Mammary epithelial cell (primary cell): ENCODE measurements at regions of chr2 and their contacts with region 1.

Region 1: GRCh38 chr2:177332041-177332991 is 60.3 kb upstream of the AGPS start:
- DNase-seq: peak; percentile 60
- H3K4me3 ChIP-seq: no peak overlapping the region
- H3K27ac ChIP-seq: no peak overlapping the region
- H3K4me1 ChIP-seq: peaks cover 10% of the 10 kb centered on the region
- H3K27me3 ChIP-seq: no peaks in the 10 kb centered on the region
- CTCF ChIP-seq: peak; percentile 59 to 67

Region 2: DNA sequence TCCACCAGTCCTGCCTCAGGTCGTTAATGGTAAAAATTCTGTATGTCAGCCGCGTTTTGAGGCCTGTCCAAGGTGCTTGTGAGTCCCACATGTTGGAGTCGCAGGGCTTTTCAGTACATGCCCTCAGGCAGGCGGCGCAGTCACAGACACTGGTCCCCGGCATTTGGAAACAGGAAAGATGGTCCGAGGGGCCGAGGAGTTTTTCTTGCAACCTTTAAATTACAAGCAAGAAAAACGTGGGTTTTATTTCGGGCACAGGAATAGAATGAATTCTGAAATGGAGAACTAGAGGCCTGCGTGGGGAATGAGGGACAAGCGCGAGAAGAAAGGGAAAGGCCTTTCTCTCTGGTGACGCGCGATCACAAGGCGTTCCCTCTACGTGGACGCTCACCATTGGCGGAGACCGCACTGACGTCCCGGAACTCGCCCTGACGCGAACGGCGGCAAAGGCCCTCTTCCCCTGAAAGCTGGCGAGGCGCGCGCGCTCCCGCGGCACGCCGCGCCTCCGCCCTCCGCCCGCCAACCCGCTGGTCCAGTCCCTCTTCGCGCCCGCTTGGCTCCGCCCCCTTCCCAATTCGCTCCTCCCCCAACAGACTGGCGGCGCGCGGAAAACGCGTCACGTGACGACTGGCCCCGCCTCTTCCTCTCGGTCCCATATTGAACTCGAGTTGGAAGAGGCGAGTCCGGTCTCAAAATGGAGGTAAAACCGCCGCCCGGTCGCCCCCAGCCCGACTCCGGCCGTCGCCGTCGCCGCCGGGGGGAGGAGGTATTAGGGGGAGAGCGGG is 120.0 kb before region 1 on chr2 and contains the start of gene HNRNPA3:
- CTCF ChIA-PET with region 1: interaction called, 5 read pairs
- dilution Hi-C with region 1: no loop called
- in situ Hi-C with region 1: no loop called
- intact Hi-C with region 1: loop called (anchors 5 kb)
- DNase-seq: peak; percentile 99
- H3K4me3 ChIP-seq: peak within 1 kb of the TSS; percentile 81 to 100 (median 97)
- H3K27ac ChIP-seq: peak within 1 kb of the TSS; percentile 99
- H3K4me1 ChIP-seq: peaks cover 20% of the 10 kb centered on the region
- H3K27me3 ChIP-seq: no peaks in the 10 kb centered on the region
- CTCF ChIP-seq: peak in 1 of 2 donors; percentile 18
- total RNA-seq, gene HNRNPA3: 18.2 to 196 TPM

Region 3: DNA sequence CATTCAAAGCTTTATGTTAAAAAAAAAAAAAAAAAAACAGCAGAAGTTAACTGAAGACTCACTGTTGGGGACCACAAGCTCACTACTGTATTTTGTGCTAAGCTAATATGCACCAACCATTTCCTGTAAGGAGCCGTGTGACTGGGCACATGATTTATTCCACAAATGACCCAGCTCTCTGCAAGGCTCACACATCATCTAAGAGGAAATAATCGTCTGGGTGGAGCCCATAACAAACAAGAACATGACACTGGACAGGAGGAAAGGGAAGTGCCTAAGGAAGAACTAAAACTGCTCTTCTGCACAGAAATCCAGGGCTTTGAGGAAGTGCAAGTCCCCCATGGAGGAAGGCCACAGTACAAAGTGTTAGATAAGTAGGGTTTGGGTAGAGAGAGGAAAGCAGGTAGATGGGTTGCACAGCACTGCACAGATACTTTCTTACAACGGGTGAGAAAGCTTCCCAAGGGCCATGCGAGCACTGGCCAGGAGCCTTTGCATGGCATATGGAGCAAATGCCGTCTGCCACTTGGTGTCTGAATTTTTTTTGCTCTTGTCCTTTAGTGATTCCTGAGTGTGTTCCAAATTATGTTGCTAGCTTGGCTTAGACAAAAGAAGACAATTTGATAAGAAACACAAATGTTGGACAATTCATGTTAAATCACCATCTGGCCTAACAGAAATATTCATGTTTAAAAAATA is 92.2 kb before region 1 on chr2:
- CTCF ChIA-PET with region 1: interaction called, 3 read pairs
- dilution Hi-C with region 1: loop called (anchors 5 kb)
- in situ Hi-C with region 1: no loop called
- intact Hi-C with region 1: no loop called
- DNase-seq: peak; percentile 52
- H3K4me3 ChIP-seq: no peak overlapping the region
- H3K27ac ChIP-seq: peak overlapping the region; percentile 92
- H3K4me1 ChIP-seq: peaks cover 45% of the 10 kb centered on the region
- H3K27me3 ChIP-seq: no peaks in the 10 kb centered on the region
- CTCF ChIP-seq: no peak

Region 4: GRCh38 chr2:177296040-177296439 is 36.3 kb before region 1 on chr2:
- CTCF ChIA-PET with region 1: no interaction called
- dilution Hi-C with region 1: no loop called
- in situ Hi-C with region 1: no loop called
- intact Hi-C with region 1: loop called (anchors 1 kb)
- DNase-seq: peak; percentile 19
- H3K4me3 ChIP-seq: no peak overlapping the region
- H3K27ac ChIP-seq: no peak overlapping the region
- H3K4me1 ChIP-seq: peaks cover 4% of the 10 kb centered on the region
- H3K27me3 ChIP-seq: no peaks in the 10 kb centered on the region
- CTCF ChIP-seq: peak; percentile 35 to 43

Region 5: DNA sequence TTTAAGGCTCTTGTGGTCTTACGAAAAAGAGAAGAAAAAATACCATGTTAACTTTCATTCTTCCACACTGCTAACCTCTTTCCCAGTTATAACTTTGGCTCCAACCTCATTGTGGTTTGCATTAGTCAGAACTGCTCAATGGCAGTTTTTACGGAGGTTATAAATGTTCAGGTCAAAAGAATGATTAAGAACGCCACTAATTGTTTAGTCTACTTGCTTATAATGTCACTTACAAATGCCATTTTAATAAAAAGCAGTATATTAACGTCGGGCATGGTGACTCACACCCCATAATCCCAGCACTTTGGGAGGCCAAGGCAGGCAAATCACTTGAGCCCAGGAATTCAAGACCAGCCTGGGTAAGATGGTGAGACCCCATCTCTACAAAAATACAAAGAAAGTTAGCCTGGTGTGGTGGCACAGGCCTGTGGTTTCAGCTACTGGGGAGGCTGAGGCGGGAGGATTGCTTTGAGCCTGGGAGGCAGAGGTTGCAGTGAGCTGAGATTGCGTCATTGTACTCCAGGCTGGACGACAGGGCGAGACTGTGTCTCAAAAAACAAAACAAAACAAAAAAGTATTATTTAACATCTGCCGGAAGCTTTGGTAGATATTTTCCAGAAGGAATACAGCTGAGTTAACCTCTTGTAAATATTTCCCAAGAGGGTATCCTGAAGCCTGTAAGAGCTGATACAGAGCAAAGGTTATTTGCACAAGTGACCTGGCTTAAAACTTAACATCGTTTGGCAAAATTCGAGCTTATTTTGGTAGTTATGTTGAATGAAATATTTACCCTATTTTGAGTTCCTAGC is 65.4 kb after region 1 on chr2:
- CTCF ChIA-PET with region 1: no interaction called
- dilution Hi-C with region 1: no loop called
- in situ Hi-C with region 1: no loop called
- intact Hi-C with region 1: no loop called
- DNase-seq: peak; percentile 77
- H3K4me3 ChIP-seq: no peak overlapping the region
- H3K27ac ChIP-seq: peak overlapping the region; percentile 40
- H3K4me1 ChIP-seq: peaks cover 30% of the 10 kb centered on the region
- H3K27me3 ChIP-seq: no peaks in the 10 kb centered on the region
- CTCF ChIP-seq: no peak

Region 6: DNA sequence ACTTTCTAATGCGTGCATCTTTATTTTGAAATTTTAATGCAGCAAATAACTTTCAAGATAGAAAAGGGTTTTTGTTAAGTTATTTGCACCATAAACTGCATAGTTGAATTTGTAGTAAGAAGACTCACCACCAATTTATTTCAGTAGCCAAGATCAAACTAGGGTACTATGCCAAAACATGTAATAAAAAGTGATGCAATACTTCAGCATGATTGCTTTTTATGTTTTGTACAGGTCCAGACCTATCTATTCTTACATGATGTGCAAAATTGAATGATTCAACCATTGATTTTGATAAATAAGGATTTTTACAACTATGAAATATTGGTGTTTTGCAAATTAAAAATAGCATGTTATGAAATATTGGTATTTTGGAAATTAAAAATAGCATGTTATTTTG is 87.0 kb after region 1 on chr2:
- CTCF ChIA-PET with region 1: interaction called, 3 read pairs
- dilution Hi-C with region 1: loop called (anchors 5 kb)
- in situ Hi-C with region 1: loop called (anchors 5 kb)
- intact Hi-C with region 1: loop called (anchors 1 kb)
- DNase-seq: peak; percentile 80
- H3K4me3 ChIP-seq: peak overlapping the region in 1 of 3 experiments; percentile 37
- H3K27ac ChIP-seq: no peak overlapping the region
- H3K4me1 ChIP-seq: peaks cover 12% of the 10 kb centered on the region
- H3K27me3 ChIP-seq: no peaks in the 10 kb centered on the region
- CTCF ChIP-seq: no peak

Region 7: DNA sequence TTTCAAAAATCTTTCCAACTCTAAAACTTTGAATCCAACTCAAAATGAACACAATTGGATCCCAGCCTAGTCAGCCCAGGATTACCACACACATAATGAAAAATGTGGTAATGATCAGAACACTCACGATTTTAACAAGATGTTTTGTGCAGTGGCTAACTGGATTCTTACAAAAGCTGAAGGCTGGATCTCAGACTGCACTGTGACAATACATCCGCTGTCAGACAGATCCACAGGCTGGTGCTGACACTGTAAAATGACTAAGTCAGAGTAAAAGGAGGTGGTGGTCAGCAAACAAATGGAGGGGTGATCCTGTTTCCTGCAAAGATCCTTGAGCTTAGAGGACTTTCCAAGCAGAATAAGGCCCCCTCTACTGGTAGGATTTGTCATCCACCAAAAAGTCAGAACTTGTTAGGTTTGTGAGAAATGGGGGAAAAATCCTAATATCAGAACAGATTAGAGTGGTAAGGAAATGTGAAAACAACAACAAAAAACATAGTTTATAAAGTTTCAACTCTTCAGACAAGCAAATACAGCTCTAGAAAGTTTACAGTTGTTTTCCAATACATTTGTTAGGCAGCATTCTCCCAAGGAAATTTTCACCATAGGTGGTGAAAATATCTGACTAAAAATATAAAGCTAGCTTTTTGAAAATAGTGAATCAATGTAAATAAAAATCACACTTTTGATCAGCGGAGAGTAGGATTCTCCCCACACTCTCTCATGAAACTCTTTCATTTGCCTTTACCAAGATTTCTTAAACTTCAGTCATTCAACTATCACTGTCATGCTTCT is 272.2 kb after region 1 on chr2:
- CTCF ChIA-PET with region 1: no interaction called
- dilution Hi-C with region 1: no loop called
- in situ Hi-C with region 1: loop called (anchors 10 to 25 kb)
- intact Hi-C with region 1: no loop called
- DNase-seq: peak; percentile 23
- H3K4me3 ChIP-seq: no peak overlapping the region
- H3K27ac ChIP-seq: no peak overlapping the region
- H3K4me1 ChIP-seq: no peaks in the 10 kb centered on the region
- H3K27me3 ChIP-seq: no peaks in the 10 kb centered on the region
- CTCF ChIP-seq: peak; percentile 62 to 76

Region 8: GRCh38 chr2:177724398-177725287 is 392.3 kb after region 1 on chr2:
- CTCF ChIA-PET with region 1: interaction called, 5 read pairs
- dilution Hi-C with region 1: no loop called
- in situ Hi-C with region 1: loop called in 1 of 2 experiments (anchors 10 kb)
- intact Hi-C with region 1: loop called (anchors 1 kb)
- DNase-seq: peak; percentile 15
- H3K4me3 ChIP-seq: no peak overlapping the region
- H3K27ac ChIP-seq: no peak overlapping the region
- H3K4me1 ChIP-seq: no peaks in the 10 kb centered on the region
- H3K27me3 ChIP-seq: peaks cover 2% of the 10 kb centered on the region
- CTCF ChIP-seq: peak; percentile 91 to 95

Region 9: GRCh38 chr2:178478439-178479274 is 1146.3 kb after region 1 on chr2 and contains the start of gene FKBP7:
- CTCF ChIA-PET with region 1: no interaction called
- dilution Hi-C with region 1: no loop called
- in situ Hi-C with region 1: no loop called
- intact Hi-C with region 1: no loop called
- DNase-seq: peak; percentile 72
- H3K4me3 ChIP-seq: peak within 1 kb of the TSS; percentile 73 to 95 (median 88)
- H3K27ac ChIP-seq: peak within 1 kb of the TSS; percentile 91
- H3K4me1 ChIP-seq: peaks cover 25% of the 10 kb centered on the region
- H3K27me3 ChIP-seq: no peaks in the 10 kb centered on the region
- CTCF ChIP-seq: peak; percentile 75 to 77
- total RNA-seq, gene FKBP7: 1.6 to 2.3 TPM